ENCODE measurements at regions of chr3 and their contacts with region 1.

Region 1: GRCh38 chr3:183635431-183636220 is at the start of gene KLHL24:
- DNase-seq: peak; percentile 95
- H3K4me3 Mint-ChIP-seq: peak within 1 kb of the TSS; percentile 91
- H3K27ac Mint-ChIP-seq: peak within 1 kb of the TSS; percentile 93
- H3K4me1 Mint-ChIP-seq: peaks cover 40% of the 10 kb centered on the region
- H3K27me3 Mint-ChIP-seq: no peaks in the 10 kb centered on the region
- total RNA-seq, gene KLHL24: 26.2 to 26.9 TPM

Region 2: DNA sequence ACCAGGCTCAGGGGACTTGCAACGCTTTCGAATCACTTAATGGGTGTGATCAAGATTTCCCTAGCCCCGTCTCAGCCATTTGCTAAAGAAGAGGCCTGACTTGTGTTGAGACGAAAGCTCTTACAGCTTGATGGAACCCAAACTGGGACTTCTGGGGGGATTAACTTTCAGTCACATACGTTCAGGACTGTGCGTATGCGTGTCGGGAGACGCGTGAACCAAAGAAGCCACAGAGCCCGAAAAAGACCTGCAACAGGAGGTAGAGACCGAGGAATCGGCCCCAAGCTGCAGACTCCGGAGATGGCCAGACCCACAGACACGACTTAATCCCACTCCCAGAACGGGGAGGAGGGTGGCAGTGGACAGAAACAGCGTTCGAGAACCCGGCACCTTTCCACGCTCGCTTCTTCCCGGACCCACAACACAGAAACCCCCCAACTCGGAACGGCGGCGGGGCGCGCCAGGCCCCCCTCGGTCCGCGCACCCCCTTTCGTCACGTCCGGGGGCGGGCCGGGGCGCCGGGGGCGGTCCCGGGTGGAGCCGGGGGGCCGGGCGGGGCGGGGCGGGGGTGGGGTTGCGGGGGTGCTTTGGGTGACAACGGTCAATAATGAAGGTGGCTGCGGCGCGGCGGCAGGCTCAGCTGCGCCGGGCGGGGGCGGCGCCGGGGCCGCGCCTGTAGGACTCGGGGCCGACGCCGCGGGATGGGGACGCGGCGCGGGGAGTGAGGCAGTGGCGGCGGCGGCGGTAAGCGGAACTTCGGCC is 842.5 kb before region 1 on chr3 and contains the start of gene ATP11B:
- CTCF ChIA-PET with region 1: no interaction called
- intact Hi-C with region 1: loop called (anchors 10 kb)
- DNase-seq: peak; percentile 70
- H3K4me3 Mint-ChIP-seq: peak within 1 kb of the TSS; percentile 99
- H3K27ac Mint-ChIP-seq: peak within 1 kb of the TSS; percentile 97
- H3K4me1 Mint-ChIP-seq: peaks cover 25% of the 10 kb centered on the region
- H3K27me3 Mint-ChIP-seq: no peaks in the 10 kb centered on the region
- total RNA-seq, gene ATP11B: 86.6 to 92.3 TPM

Region 3: DNA sequence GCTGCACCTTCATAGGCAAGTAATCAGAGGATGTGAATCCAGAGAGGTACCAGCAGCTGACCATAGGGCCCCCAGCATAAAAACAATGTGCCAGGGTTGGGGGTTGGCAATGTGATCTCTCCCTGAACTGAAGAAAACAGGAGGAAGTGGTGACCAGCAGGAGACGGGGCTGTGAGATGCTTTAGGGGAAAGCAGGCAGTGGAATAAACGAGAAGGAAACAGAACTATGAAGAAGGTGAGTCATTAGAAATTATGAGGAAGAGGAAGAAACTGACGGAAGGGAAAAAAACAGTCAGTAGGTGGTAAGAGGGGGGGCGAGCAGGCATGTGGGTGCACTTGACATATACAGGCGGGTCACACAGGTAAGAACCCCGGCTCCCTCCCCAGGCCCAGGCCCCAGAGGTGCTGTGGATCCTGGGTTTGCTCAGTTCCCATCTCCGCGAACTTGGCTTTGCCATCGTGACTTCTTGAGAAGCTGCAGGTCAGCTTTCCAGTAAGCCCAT is 424.7 kb before region 1 on chr3:
- CTCF ChIA-PET with region 1: no interaction called
- intact Hi-C with region 1: loop called (anchors 5 kb)
- DNase-seq: peak; percentile 73
- H3K4me3 Mint-ChIP-seq: no peak overlapping the region
- H3K27ac Mint-ChIP-seq: peak overlapping the region; percentile 85
- H3K4me1 Mint-ChIP-seq: peaks cover 63% of the 10 kb centered on the region
- H3K27me3 Mint-ChIP-seq: no peaks in the 10 kb centered on the region

Region 4: DNA sequence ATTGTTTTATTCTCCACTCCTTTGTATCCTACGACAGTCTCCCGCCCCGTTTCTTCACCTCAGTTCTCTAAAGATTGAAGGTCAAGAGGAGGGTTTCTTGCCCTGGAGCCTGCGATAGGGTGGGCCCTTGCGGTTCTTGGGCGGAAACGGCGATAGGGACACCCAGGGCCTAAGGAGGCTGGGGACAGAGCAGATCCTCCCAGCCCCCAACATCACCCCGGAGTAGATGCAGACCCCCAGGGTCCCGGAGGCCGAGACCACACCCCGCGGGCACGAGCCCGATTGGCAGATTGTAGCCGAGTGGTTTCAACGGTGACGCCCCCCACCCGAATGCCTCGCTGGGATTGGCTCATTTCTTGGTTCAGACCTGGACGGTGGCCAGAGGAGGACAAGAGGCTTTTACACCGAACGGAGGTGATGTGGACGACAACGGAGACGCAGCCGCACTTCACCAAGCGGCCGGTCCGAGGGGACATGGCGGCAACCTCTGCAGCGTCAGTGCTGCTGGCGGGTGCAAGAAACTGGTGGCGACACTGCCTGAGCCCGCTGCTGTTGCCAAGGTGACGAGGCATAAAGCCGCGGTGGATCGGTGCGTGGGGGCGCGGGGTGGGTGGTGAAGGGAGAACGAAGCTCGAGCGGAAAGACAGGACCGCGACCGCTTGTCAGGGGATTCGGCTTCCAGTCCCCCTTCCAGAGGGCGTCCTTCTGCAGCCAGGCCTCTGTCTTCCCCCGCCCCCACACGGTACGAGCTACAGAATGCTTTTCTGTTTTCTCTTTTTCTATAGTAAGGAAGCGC is 188.2 kb before region 1 on chr3:
- CTCF ChIA-PET with region 1: no interaction called
- intact Hi-C with region 1: no loop called
- DNase-seq: peak; percentile 82
- H3K4me3 Mint-ChIP-seq: peak overlapping the region; percentile 91
- H3K27ac Mint-ChIP-seq: peak overlapping the region; percentile 46
- H3K4me1 Mint-ChIP-seq: peaks cover 10% of the 10 kb centered on the region
- H3K27me3 Mint-ChIP-seq: no peaks in the 10 kb centered on the region

Region 5: GRCh38 chr3:183468424-183468823 is 167.2 kb before region 1 on chr3:
- CTCF ChIA-PET with region 1: interaction called, 4 read pairs
- intact Hi-C with region 1: loop called (anchors 1 kb)
- DNase-seq: no peak
- H3K4me3 Mint-ChIP-seq: no peak overlapping the region
- H3K27ac Mint-ChIP-seq: peak overlapping the region; percentile 87
- H3K4me1 Mint-ChIP-seq: peaks cover 27% of the 10 kb centered on the region
- H3K27me3 Mint-ChIP-seq: no peaks in the 10 kb centered on the region

Region 6: DNA sequence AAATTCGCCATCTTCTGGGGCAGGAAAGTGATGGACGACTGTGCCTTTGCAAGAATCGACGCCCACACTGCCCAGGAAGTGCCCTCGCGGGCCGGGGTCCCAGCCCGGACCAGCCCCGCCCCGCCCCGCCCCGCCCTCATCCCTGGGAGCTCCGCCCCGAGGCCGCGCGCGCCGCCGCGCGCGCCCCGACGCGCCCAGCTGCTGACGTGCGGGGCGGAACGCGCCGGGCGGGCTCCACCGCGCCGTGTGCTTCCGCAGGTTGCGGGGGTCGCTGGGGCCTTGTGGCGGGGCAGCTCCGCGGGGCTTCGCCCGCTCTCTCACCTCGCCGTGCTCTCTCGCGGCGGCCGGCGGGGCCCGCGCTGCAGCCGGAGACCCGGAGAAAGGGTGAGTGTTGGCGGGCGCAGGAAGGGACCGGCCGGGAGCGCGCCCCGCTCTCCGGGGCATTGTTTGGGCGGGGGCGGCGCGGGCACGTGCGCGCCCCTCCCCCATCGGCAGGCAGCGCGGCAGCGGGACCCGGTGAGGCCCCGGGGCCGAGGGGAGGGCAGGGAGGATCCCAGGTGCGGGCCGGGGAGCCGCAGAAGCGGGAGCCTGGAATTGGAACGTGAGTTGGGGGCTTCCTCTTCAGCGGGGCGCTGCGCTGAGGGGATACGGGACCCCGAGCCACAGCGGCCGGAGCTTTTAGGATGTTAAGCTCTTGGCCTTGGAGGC is 62.1 kb after region 1 on chr3 and contains the start of gene YEATS2:
- CTCF ChIA-PET with region 1: interaction called, 3 read pairs
- intact Hi-C with region 1: loop called (anchors 1 kb)
- DNase-seq: peak; percentile 79
- H3K4me3 Mint-ChIP-seq: peak within 1 kb of the TSS; percentile 80
- H3K27ac Mint-ChIP-seq: peak within 1 kb of the TSS; percentile 91
- H3K4me1 Mint-ChIP-seq: peaks cover 28% of the 10 kb centered on the region
- H3K27me3 Mint-ChIP-seq: no peaks in the 10 kb centered on the region
- total RNA-seq, gene YEATS2: 38.1 to 39.0 TPM

Region 7: GRCh38 chr3:184174646-184175492 is 539.2 kb after region 1 on chr3 and contains the start of gene AP2M1:
- CTCF ChIA-PET with region 1: no interaction called
- intact Hi-C with region 1: loop called (anchors 2 kb)
- DNase-seq: peak; percentile 98
- H3K4me3 Mint-ChIP-seq: peak within 1 kb of the TSS; percentile 88
- H3K27ac Mint-ChIP-seq: peak within 1 kb of the TSS; percentile 56
- H3K4me1 Mint-ChIP-seq: peaks cover 29% of the 10 kb centered on the region
- H3K27me3 Mint-ChIP-seq: no peaks in the 10 kb centered on the region
- total RNA-seq, gene AP2M1: 206 to 212 TPM

Region 8: DNA sequence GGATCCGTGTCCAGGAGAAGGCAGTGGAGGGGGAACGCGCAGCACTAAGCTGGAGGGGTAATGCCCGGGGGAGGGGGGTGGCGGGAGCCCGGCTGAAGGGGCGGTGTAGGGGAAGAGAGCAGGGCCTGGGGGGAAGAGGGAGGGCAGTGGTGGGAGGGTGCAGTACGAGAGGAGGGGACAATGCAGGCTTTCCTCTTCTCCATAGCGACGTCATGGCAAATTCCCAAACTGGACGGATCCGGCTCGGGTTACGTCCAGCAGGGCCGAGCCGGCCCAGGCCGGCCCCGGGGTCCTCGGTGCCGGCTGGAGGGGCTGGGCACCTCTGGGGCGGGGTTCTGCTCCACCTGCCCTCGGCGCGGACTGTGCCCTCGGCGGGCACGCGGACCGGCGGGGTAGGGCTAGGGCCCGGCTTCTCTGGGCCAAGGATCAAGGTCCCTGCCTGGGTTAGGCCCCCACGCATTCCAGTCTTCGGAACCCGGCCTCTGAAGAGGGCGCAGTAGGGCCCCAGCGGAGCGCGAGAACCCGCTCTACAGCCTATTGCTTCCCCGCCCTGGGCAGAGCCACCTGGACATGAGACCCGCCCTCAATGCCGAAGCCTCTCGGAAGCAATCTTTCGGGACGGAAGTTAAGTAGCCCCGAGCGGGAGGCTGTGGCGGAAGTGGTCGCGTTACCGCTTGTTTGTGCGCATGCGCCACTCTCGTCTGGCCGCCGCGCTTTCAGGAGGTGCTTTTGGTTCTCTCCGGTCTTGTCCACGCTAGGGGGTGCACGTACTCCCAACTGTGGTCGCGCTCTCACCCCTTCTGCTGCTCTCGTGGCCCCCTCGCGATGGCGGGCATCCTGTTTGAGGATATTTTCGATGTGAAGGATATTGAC is 727.3 kb after region 1 on chr3:
- CTCF ChIA-PET with region 1: no interaction called
- intact Hi-C with region 1: loop called (anchors 5 kb)
- DNase-seq: peak; percentile 97
- H3K4me3 Mint-ChIP-seq: peak overlapping the region; percentile 97
- H3K27ac Mint-ChIP-seq: peak overlapping the region; percentile 94
- H3K4me1 Mint-ChIP-seq: peaks cover 30% of the 10 kb centered on the region
- H3K27me3 Mint-ChIP-seq: no peaks in the 10 kb centered on the region

Measured in activated naive CD4-positive, alpha-beta T cell treated with anti-CD3 and anti-CD28 coated beads for 36 hours (primary cell).